CD4-positive, alpha-beta memory T cell (primary cell): ENCODE measurements at regions of chr7 and their contacts with region 1.

Region 1: GRCh38 chr7:66493235-66494181 is 135.2 kb upstream of the KCTD7 start:
- DNase-seq: peak; percentile 96 to 98 (median 97)
- H3K4me3 ChIP-seq: peak overlapping the region; percentile 95 to 97
- H3K4me3 Mint-ChIP-seq: peak overlapping the region; percentile 90 to 96 (median 94)
- H3K27ac ChIP-seq: peak overlapping the region; percentile 92
- H3K27ac Mint-ChIP-seq: peak overlapping the region; percentile 99
- H3K4me1 ChIP-seq: peaks cover 8% of the 10 kb centered on the region
- H3K4me1 Mint-ChIP-seq: peaks cover 12 to 26% (median 18%) of the 10 kb centered on the region in 4 donors
- H3K27me3 ChIP-seq: no peaks in the 10 kb centered on the region
- H3K27me3 Mint-ChIP-seq: no peaks in the 10 kb centered on the region

Region 2: DNA sequence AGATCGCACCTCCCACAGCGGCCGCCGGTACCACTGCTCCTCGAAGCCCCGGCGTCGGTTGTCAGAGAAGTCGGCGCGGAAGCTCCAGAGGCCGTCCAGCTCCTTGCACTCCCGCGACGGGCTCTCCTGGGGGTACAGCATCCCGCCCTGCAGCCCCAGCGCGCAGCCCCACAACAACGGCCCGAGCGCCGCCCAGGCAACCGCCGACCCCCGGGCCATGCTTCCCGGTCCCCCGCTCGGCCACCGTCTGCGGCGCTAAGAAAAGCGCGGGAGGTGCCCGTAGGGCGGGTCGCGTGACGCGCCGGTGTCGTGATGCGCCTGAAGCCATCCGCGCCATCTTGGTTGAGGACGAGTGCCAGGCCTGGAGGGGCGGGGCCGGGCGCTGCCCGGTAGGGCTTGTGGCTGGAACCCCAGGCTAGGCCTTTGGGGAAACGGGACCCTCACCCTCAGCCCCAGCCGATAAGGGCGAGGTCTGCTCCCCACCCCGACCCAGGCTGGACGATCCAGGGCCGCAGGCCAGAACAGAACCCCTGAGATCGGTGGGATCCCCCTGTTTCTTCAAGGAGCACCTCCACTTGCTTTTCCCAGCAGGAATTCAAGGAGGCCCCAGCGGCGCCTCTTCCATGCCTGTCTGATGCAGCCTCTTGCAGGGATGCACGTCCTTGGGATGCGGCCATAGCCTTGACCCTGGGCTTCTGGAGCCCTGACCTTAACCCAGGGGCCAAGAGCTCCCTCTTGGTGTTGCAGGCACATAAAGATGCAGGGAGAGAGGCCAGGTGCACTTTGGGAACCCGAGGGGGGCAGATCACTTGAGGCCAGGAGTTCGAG is 511.3 kb before region 1 on chr7 and contains the start of gene GUSB:
- CTCF ChIA-PET with region 1: no interaction called
- POLR2A ChIA-PET with region 1: interaction called, 3 read pairs
- intact Hi-C with region 1: loop called (anchors 2 kb)
- DNase-seq: peak; percentile 84 to 87 (median 86)
- H3K4me3 ChIP-seq: peak within 1 kb of the TSS; percentile 47 to 90
- H3K4me3 Mint-ChIP-seq: peak within 1 kb of the TSS; percentile 82 to 95 (median 87)
- H3K27ac ChIP-seq: peak within 1 kb of the TSS; percentile 64
- H3K27ac Mint-ChIP-seq: peak within 1 kb of the TSS; percentile 85 to 96 (median 92)
- H3K4me1 ChIP-seq: peaks cover 17% of the 10 kb centered on the region
- H3K4me1 Mint-ChIP-seq: peaks cover 6 to 12% (median 9%) of the 10 kb centered on the region in 4 donors
- H3K27me3 ChIP-seq: no peaks in the 10 kb centered on the region
- H3K27me3 Mint-ChIP-seq: no peaks in the 10 kb centered on the region
- total RNA-seq, gene GUSB: 49.3 to 52.0 TPM

Region 3: DNA sequence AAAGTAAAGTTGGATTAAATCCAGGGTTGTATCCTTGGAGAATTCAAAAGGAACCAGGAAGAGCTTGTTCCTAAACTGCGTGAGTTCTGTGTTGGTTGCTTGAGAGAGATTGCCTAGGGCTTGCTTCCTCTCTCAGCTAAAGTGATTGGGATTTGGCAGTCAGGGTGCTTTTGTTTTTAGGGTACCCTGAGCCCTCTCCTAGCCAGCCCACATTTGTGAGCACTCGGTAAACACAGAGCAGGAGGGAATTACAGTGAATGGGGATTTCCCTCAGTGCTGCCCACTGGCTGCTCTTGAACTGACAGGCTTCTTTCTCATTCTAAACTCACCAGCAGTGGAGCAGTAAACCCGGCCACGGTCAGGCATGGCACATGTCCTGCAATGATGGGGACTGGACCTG is 141.4 kb before region 1 on chr7:
- CTCF ChIA-PET with region 1: no interaction called
- POLR2A ChIA-PET with region 1: no interaction called
- intact Hi-C with region 1: no loop called
- DNase-seq: no peak
- H3K4me3 ChIP-seq: no peak overlapping the region
- H3K4me3 Mint-ChIP-seq: no peak overlapping the region
- H3K27ac ChIP-seq: no peak overlapping the region
- H3K27ac Mint-ChIP-seq: no peak overlapping the region
- H3K4me1 ChIP-seq: no peaks in the 10 kb centered on the region
- H3K4me1 Mint-ChIP-seq: no peaks in the 10 kb centered on the region
- H3K27me3 ChIP-seq: peaks cover 5% of the 10 kb centered on the region
- H3K27me3 Mint-ChIP-seq: peaks cover 6 to 12% of the 10 kb centered on the region in 2 donors

Region 4: DNA sequence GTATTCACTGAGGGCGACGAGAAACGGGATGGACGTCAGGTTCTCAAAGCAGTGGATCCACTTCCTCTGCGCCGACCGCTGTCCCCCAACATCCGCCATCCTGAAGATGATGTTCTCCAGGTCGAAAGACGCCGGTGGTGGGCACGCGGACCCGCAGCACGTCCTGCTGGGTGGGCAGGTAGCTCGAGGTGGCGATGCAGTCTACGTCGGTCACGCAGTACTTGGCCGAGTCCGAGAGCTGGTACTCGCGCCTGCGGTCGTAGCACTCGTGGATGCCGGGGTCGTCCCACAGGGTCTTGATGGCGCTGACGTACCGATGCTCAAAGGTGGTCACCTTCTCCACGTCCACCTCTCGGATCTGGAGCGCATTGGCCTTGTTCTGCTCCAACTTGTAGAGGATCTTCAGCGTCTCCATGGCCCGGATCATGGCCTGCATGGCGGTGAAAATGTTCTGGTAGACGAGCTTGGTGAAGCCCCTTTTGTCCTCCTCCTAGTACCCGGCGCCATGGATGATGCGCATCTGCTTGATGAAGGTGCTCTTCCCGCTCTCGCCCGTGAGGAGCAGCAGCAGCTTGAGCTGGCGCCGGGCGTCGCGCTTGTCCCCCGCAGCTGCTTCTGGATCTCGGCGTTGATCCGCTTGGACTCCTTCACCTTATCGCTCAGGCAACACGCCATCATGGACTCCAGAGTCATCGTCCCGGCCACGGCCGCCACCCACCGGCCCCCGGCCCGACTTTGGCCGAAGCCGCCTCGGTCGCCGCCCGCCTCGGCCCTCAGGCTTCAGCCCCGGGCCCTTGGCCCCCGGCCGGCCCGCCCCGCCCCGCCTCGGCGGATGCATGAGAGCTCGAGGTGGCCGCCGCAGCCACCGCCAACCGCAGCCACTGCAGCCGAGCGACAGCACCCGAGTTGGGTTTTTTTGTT is 12.3 kb after region 1 on chr7:
- CTCF ChIA-PET with region 1: no interaction called
- POLR2A ChIA-PET with region 1: interaction called, 27 read pairs
- intact Hi-C with region 1: no loop called
- DNase-seq: peak; percentile 26 to 46 (median 42)
- H3K4me3 ChIP-seq: no peak overlapping the region
- H3K4me3 Mint-ChIP-seq: peak overlapping the region; percentile 61 to 77 (median 70)
- H3K27ac ChIP-seq: no peak overlapping the region
- H3K27ac Mint-ChIP-seq: peak overlapping the region in 2 of 7 donors; percentile 77 to 91
- H3K4me1 ChIP-seq: peaks cover 6% of the 10 kb centered on the region
- H3K4me1 Mint-ChIP-seq: peaks cover 0 to 20% (median 3%) of the 10 kb centered on the region in 4 donors
- H3K27me3 ChIP-seq: peaks cover 9% of the 10 kb centered on the region
- H3K27me3 Mint-ChIP-seq: peaks cover 5 to 8% of the 10 kb centered on the region in 2 donors

Region 5: DNA sequence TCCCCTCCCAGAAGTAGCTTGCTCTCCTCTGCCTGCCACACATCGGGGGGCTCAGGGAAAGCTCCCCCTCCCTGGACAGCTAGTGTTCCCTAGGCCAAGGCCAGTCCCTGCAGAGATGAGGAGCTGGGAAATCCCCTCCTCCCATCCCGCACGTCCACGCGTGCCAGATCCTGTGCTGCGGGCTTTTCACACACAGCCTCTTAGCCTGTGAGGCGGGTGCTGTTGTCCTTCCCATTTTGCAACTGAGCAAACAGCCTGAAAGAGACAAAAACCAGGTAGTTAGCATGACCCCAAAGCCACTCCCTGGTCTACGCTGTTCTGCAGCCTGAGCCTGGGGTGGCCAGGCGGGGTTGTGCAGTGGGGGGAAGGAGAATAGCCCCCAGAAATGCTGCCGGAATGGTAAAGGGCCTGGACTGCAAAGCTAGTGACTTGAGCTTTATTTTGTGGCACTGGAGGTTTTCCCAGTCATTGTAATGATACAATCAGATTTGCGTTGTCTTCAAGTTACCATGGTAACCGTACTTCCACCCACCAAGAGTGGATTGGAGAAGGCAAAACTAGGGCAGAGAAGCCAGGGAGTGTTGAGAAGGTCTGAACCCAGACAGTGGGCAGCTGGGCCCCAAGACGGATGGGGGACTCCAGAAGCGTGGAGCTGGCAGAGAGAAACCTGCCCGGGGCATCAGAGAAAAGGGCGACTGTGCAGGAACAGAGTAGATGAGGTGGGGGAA is 36.5 kb after region 1 on chr7:
- CTCF ChIA-PET with region 1: no interaction called
- POLR2A ChIA-PET with region 1: no interaction called
- intact Hi-C with region 1: no loop called
- DNase-seq: no peak
- H3K4me3 ChIP-seq: no peak overlapping the region
- H3K4me3 Mint-ChIP-seq: no peak overlapping the region
- H3K27ac ChIP-seq: no peak overlapping the region
- H3K27ac Mint-ChIP-seq: peak overlapping the region in 4 of 7 donors; percentile 40 to 71 (median 54)
- H3K4me1 ChIP-seq: no peaks in the 10 kb centered on the region
- H3K4me1 Mint-ChIP-seq: peaks cover 0 to 4% (median 2%) of the 10 kb centered on the region in 4 donors
- H3K27me3 ChIP-seq: no peaks in the 10 kb centered on the region
- H3K27me3 Mint-ChIP-seq: no peaks in the 10 kb centered on the region

Region 6: GRCh38 chr7:66654123-66654732 is 160.7 kb after region 1 on chr7:
- CTCF ChIA-PET with region 1: no interaction called
- POLR2A ChIA-PET with region 1: interaction called, 6 read pairs
- intact Hi-C with region 1: loop called (anchors 1 kb)
- DNase-seq: peak; percentile 97 to 99 (median 98)
- H3K4me3 ChIP-seq: peak overlapping the region; percentile 90 to 91
- H3K4me3 Mint-ChIP-seq: peak overlapping the region; percentile 96 to 99 (median 97)
- H3K27ac ChIP-seq: peak overlapping the region; percentile 95
- H3K27ac Mint-ChIP-seq: peak overlapping the region; percentile 99
- H3K4me1 ChIP-seq: peaks cover 17% of the 10 kb centered on the region
- H3K4me1 Mint-ChIP-seq: peaks cover 10 to 33% (median 24%) of the 10 kb centered on the region in 4 donors
- H3K27me3 ChIP-seq: no peaks in the 10 kb centered on the region
- H3K27me3 Mint-ChIP-seq: no peaks in the 10 kb centered on the region

Region 7: DNA sequence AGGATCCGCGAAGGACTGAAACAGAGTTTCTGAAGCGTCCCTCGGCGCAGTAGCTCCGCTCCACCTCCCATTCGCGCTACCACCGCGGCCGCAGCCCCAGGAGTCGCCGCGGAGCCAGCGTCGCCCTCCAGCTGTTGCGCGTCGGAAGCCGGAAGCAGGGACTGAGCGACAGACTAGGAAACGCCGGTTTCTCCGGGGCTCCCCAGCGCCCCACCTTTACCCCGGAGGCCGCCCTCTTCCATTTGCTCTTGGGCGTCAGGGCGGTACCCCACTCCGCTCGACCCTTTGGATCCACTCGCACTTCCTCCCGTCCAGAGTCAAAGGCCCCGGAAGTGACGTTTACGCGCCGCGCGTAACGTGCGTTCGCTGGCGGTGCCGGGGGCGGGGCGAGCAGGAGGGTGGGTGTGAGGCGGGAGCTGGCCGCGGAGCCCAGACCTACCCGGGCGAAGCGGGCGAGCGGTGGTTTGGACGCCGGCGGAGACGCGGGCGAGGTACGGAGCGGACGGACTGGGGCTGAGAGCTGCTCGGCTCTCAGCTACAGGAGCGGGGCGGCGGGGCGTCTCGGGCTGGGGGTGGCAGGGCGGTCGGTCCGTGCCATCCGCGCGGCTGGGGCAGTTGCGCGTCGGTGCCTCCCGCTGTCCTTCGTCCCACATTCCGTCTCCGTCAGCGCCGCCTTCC is 246.9 kb after region 1 on chr7 and contains the start of gene RABGEF1:
- CTCF ChIA-PET with region 1: interaction called, 3 read pairs
- POLR2A ChIA-PET with region 1: interaction called, 7 read pairs
- intact Hi-C with region 1: loop called (anchors 1 kb)
- DNase-seq: peak; percentile 95 to 98 (median 96)
- H3K4me3 ChIP-seq: peak within 1 kb of the TSS; percentile 40 to 76
- H3K4me3 Mint-ChIP-seq: peak within 1 kb of the TSS; percentile 91 to 98 (median 94)
- H3K27ac ChIP-seq: peak within 1 kb of the TSS; percentile 85
- H3K27ac Mint-ChIP-seq: peak within 1 kb of the TSS; percentile 95 to 99 (median 97)
- H3K4me1 ChIP-seq: peaks cover 16% of the 10 kb centered on the region
- H3K4me1 Mint-ChIP-seq: peaks cover 15 to 55% (median 38%) of the 10 kb centered on the region in 4 donors
- H3K27me3 ChIP-seq: no peaks in the 10 kb centered on the region
- H3K27me3 Mint-ChIP-seq: no peaks in the 10 kb centered on the region
- total RNA-seq, gene RABGEF1: 23.0 to 28.6 TPM

Region 8: DNA sequence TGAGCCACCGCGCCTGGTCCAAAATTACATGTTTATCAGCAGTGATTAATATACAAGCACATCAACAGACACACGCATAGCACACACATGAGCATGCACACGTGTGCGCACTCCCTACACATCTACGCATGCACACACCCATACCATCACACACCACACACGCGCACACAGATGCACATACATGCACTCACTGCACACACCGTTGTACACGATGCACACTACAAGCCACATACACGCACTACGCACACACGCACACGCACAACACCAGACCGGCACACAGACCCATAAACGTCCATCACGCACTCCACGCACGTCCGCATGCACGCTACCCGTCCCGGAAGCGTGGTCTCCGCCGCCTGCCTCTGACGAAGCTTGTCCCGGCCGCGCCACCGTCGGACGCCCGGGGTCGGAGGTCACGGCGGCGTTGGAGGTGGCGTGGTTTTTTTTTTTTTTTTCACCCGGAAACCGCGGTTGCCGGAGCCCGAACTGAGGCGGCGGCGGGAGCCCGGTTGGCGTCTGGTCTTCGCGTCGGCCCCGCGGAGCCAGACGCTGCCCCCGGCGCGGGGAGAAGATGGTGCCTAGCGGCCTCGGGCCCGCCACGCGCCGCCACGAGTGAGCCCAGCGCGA is 427.4 kb after region 1 on chr7 and contains the start of gene TMEM248:
- CTCF ChIA-PET with region 1: no interaction called
- POLR2A ChIA-PET with region 1: interaction called, 15 read pairs
- intact Hi-C with region 1: loop called (anchors 2 kb)
- DNase-seq: peak; percentile 90 to 95 (median 93)
- H3K4me3 ChIP-seq: peak within 1 kb of the TSS; percentile 64 to 91
- H3K4me3 Mint-ChIP-seq: peak within 1 kb of the TSS; percentile 95 to 100 (median 98)
- H3K27ac ChIP-seq: peak within 1 kb of the TSS; percentile 78
- H3K27ac Mint-ChIP-seq: peak within 1 kb of the TSS; percentile 97 to 100 (median 99)
- H3K4me1 ChIP-seq: peaks cover 38% of the 10 kb centered on the region
- H3K4me1 Mint-ChIP-seq: peaks cover 22 to 49% (median 36%) of the 10 kb centered on the region in 4 donors
- H3K27me3 ChIP-seq: no peaks in the 10 kb centered on the region
- H3K27me3 Mint-ChIP-seq: peaks cover 0 to 2% of the 10 kb centered on the region in 2 donors
- total RNA-seq, gene TMEM248: 95.9 to 96.8 TPM